MCF 10A (cell line): ENCODE measurements at regions of chr21 and their contacts with region 1.

Region 1: GRCh38 chr21:20030390-20030789 is 967.8 kb upstream of the NCAM2 start:
- DNase-seq: no peak
- H3K4me3 Mint-ChIP-seq: no peak overlapping the region
- H3K27ac Mint-ChIP-seq: no peak overlapping the region
- H3K4me1 Mint-ChIP-seq: peaks cover 5% of the 10 kb centered on the region
- H3K27me3 Mint-ChIP-seq: no peaks in the 10 kb centered on the region
- CTCF ChIP-seq: no peak

Region 2: DNA sequence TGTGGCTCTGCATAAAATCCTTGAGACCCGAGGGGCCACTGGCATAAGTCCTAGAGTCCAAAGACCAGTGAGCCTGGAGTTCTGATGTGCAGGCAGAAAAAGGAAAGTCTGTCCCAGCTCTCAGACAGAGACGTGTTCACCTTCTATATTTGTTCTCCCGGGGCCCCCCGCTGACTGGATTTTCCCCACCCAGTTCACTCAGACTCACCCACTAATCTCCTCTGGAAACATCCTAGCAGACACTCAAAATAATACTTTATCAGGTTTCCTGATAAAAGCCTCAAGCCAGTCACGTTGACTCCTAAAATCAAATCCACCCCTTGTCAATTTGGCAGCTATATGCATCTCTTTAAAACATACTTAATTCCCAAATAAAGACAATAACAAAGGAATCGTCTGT is 116.4 kb before region 1 on chr21:
- CTCF ChIA-PET with region 1: no interaction called
- POLR2A ChIA-PET with region 1: no interaction called
- intact Hi-C with region 1: no loop called
- DNase-seq: no peak
- H3K4me3 Mint-ChIP-seq: no peak overlapping the region
- H3K27ac Mint-ChIP-seq: no peak overlapping the region
- H3K4me1 Mint-ChIP-seq: no peaks in the 10 kb centered on the region
- H3K27me3 Mint-ChIP-seq: no peaks in the 10 kb centered on the region
- CTCF ChIP-seq: no peak

Region 3: GRCh38 chr21:20040768-20041167 is 10.4 kb after region 1 on chr21:
- CTCF ChIA-PET with region 1: interaction called, 15 read pairs
- POLR2A ChIA-PET with region 1: interaction called, 3 read pairs
- intact Hi-C with region 1: no loop called
- DNase-seq: peak; percentile 21
- H3K4me3 Mint-ChIP-seq: no peak overlapping the region
- H3K27ac Mint-ChIP-seq: no peak overlapping the region
- H3K4me1 Mint-ChIP-seq: no peaks in the 10 kb centered on the region
- H3K27me3 Mint-ChIP-seq: no peaks in the 10 kb centered on the region
- CTCF ChIP-seq: peak; percentile 40